Calu3 (cell line): ENCODE measurements at regions of chr7 and their contacts with region 1.

Region 1: GRCh38 chr7:141654551-141654950 is 47.4 kb downstream of the DENND11 start:
- DNase-seq: peak; percentile 71
- H3K4me3 Mint-ChIP-seq: no peak overlapping the region
- H3K27ac Mint-ChIP-seq: peak overlapping the region; percentile 44
- H3K4me1 Mint-ChIP-seq: peaks cover 6% of the 10 kb centered on the region
- H3K27me3 Mint-ChIP-seq: no peaks in the 10 kb centered on the region
- CTCF ChIP-seq: peak; percentile 68

Region 2: DNA sequence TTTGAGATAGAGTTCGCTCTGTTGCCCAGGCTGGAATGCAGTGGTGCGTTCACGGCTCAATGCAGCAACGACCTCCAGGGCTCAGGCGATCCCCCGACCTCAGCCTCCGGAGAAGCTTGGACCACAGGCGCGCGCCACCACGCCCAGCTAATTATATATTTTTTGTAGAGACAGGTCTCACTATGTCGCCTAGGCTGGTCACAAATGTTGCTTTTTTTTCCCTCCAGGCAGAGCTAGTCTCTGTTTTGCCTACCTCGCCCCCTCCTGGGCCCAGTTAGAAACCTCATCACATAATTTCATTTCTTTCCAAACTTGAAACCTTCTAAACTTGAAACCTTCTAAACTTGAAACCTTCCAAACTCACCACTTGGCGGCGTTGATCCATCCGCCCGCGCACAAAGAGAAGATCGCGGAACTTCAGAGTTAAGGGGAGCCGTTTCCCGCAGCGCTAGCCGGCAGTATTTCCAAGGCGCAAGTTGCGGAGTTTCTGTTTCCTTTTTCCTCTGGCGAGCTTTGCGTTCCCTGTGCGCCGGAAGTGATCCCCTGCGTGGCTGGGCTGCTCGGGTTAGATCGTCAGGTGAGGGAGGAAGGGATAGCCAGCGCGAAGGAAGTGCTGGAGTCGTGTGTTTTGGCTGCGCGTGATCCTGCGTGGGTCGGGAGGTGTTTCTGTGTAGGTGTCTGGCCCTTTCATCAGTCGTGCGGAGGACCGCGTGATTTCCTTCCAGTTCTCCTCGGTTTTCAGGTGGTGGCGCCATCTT is 83.5 kb after region 1 on chr7 and contains the start of gene SSBP1:
- CTCF ChIA-PET with region 1: interaction called, 17 read pairs
- intact Hi-C with region 1: loop called (anchors 1 kb)
- DNase-seq: peak; percentile 89
- H3K4me3 Mint-ChIP-seq: peak within 1 kb of the TSS; percentile 94
- H3K27ac Mint-ChIP-seq: peak within 1 kb of the TSS; percentile 97
- H3K4me1 Mint-ChIP-seq: peaks cover 32% of the 10 kb centered on the region
- H3K27me3 Mint-ChIP-seq: peaks cover 2% of the 10 kb centered on the region
- CTCF ChIP-seq: peak; percentile 54
- total RNA-seq, gene SSBP1: 162 and 164 TPM in 2 replicates

Region 3: DNA sequence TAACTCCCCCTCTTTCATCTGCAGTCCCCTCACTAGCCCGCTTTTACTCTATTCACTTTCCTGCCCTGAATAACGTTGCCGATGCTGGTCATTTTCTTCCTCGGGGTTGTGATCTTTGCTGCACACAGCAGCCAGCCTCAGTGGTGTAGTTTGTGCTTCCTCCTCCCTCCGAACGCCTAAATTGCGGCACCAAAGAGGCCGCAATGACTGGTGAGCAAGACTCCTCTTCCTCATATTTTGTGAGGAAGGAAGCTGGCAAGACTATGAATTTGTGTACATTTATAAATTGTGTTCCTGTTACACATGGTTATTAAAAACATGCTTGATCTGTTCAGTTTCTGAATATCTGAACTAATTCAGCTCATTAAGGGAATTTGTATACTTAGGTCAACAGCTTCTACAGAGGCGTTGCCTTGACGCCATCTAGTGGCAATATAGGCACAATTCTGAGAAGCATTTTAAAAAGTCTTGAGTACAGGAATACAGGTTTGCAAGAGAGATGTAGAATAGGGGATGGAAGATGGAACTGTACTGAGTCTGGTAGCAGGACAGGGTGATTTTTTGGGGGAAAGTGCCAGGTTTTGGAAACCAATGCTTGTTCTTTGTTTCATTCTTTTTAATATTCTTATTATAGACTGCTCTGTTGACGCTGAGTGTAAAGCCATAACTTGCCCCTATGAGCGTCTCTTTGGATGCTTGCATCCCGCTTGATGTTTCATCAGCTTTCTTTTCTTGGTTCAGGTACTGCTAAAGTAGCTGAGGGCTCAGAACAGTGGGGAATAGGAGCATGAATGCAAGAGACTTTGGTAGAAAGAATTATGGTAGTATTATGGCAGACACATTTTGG is 131.4 kb after region 1 on chr7:
- CTCF ChIA-PET with region 1: interaction called, 9 read pairs
- intact Hi-C with region 1: loop called (anchors 5 kb)
- DNase-seq: peak; percentile 16
- H3K4me3 Mint-ChIP-seq: no peak overlapping the region
- H3K27ac Mint-ChIP-seq: no peak overlapping the region
- H3K4me1 Mint-ChIP-seq: no peaks in the 10 kb centered on the region
- H3K27me3 Mint-ChIP-seq: no peaks in the 10 kb centered on the region
- CTCF ChIP-seq: peak; percentile 85

Region 4: GRCh38 chr7:142024547-142024946 is 370.0 kb after region 1 on chr7:
- CTCF ChIA-PET with region 1: no interaction called
- intact Hi-C with region 1: no loop called
- DNase-seq: no peak
- H3K4me3 Mint-ChIP-seq: no peak overlapping the region
- H3K27ac Mint-ChIP-seq: no peak overlapping the region
- H3K4me1 Mint-ChIP-seq: no peaks in the 10 kb centered on the region
- H3K27me3 Mint-ChIP-seq: no peaks in the 10 kb centered on the region
- CTCF ChIP-seq: no peak